Posterior vena cava (tissue), 2 donors: ENCODE measurements at regions of chr1 and their contacts with region 1.

Region 1: GRCh38 chr1:147494998-147495580 is 46.2 kb upstream of the BCL9 start:
- DNase-seq: peak; percentile 84

Region 2: DNA sequence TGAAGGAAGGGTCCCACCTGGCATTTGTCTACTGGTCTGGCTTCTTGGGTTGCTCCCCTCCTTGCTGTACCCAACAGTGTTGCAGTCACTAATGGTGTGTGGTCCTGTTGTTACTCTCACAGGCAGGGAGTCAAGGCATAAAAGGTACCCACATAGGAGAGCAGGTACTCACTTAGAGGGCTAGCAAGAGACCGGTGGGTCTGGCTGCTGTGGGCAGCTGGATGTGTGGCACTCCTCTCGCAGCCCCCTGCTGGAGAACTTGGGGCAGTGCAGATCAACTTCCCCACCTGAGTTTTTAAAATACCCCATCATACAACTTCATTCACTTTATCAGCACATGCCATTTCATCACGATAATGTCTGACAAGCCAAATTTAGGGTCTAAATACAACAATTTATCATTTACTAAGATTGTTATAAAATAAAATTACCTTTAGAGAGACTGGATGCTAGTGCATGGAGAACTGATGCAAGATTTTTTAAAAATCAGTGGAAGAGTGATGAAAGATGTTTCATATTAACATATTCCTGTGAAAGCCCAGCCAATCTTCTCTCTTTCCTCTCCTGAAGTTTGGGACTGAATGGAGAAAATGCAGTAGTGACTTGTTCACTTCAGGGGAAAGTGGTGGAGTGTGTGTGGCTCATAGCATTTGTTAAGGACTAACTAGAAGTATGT is 132.5 kb after region 1 on chr1:
- intact Hi-C with region 1: loop called in 1 of 2 experiments (anchors 5 kb)
- DNase-seq: no peak

Region 3: GRCh38 chr1:147640553-147641165 is 145.6 kb after region 1 on chr1:
- intact Hi-C with region 1: loop called in 1 of 2 experiments (anchors 5 kb)
- DNase-seq: peak; percentile 87

Region 4: GRCh38 chr1:147890177-147890790 is 395.2 kb after region 1 on chr1:
- intact Hi-C with region 1: loop called in 1 of 2 experiments (anchors 10 kb)
- DNase-seq: peak; percentile 85